Pancreas (tissue), 10 donors: ENCODE measurements at regions of chr14 and their contacts with region 1.

Region 1: DNA sequence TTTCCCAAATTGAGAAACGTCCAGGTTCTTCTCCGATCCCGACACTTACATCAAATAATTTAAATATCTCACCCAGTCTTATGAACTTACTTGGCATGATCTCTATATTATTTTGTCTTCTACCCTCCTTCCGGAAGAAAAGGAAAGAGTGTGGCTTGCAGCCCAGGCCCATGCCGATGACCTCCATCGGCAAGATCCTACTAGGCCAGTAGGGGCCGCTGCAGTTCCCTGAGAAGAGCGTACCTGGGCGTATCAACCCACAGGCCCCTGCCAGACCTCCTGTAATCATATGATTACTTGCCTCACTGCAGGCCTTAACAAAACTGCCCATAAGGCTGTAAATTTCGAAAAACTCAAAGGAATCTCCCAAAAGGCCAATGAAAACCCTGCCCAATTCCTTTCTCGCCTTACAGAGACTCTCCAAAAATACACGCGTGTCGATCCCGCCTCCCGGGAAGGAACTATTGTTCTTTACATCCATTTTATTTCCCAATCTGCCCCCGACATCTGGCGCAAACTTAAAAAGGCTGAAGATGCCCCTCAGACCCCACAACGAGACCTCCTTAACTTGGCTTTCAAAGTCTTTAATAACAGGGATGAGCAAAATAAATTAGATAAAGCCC is 69.6 kb downstream of the MOK start:
- DNase-seq: peak; percentile 78 to 94 (median 90)
- ATAC-seq: peak; percentile 98 to 100 (median 99)
- H3K4me3 ChIP-seq: peak overlapping the region in 1 of 4 donors; percentile 10
- H3K27ac ChIP-seq: no peak overlapping the region
- H3K4me1 ChIP-seq: no peaks in the 10 kb centered on the region
- H3K27me3 ChIP-seq: no peaks in the 10 kb centered on the region
- CTCF ChIP-seq: peak; percentile 69 to 81 (median 74)

Region 2: GRCh38 chr14:102171177-102172020 is 64.0 kb before region 1 on chr14:
- intact Hi-C with region 1: no loop called
- DNase-seq: no peak
- ATAC-seq: peak in 3 of 4 donors; percentile 48 to 62 (median 50)
- H3K4me3 ChIP-seq: no peak overlapping the region
- H3K27ac ChIP-seq: no peak overlapping the region
- H3K4me1 ChIP-seq: peaks cover 0 to 12% (median 9%) of the 10 kb centered on the region in 3 donors
- H3K27me3 ChIP-seq: no peaks in the 10 kb centered on the region
- CTCF ChIP-seq: no peak

Region 3: GRCh38 chr14:102314242-102315011 is 79.0 kb after region 1 on chr14:
- intact Hi-C with region 1: loop called (anchors 2 to 5 kb)
- DNase-seq: peak; percentile 77 to 94 (median 86)
- ATAC-seq: peak; percentile 56 to 82 (median 76)
- H3K4me3 ChIP-seq: peak overlapping the region; percentile 13 to 51 (median 28)
- H3K27ac ChIP-seq: peak overlapping the region in 1 of 4 donors; percentile 39
- H3K4me1 ChIP-seq: peaks cover 0 to 8% (median 0%) of the 10 kb centered on the region in 3 donors
- H3K27me3 ChIP-seq: no peaks in the 10 kb centered on the region
- CTCF ChIP-seq: peak; percentile 86 to 96 (median 93)